Activated B cell treated with CpG ODN at 0.5 μM for 24 hours (primary cell): ENCODE measurements at regions of chr19 and their contacts with region 1.

Region 1: GRCh38 chr19:2962045-2962561 is 15.3 kb upstream of the TLE6 start:
- DNase-seq: no peak
- ATAC-seq: peak; percentile 84
- H3K4me3 Mint-ChIP-seq: peak overlapping the region; percentile 46
- H3K27ac Mint-ChIP-seq: no peak overlapping the region
- H3K4me1 Mint-ChIP-seq: peaks cover 18% of the 10 kb centered on the region
- H3K27me3 Mint-ChIP-seq: no peaks in the 10 kb centered on the region
- CTCF ChIP-seq: peak; percentile 20

Region 2: DNA sequence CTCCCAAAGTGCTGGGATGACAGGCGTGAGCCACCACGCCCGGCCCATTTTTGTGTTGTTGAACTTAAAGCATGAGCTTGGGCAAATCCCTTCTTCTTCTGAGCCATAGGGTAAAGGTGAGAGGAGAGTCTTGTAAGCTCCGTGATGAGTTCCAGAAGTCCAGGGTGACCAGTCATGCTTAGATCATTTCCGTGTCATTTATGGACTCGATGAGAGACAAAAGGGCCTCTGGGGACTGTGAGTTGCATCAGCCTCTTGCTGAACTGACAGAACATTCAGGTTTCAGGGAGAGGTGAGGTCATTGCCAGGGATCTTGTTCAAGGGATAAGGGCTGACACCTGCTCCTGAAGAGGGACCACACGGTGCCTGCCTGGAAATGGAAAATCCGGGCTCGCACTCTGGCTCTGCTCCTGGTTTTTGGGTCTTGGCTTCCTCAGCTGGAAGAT is 432.6 kb before region 1 on chr19:
- CTCF ChIA-PET with region 1: no interaction called
- POLR2A ChIA-PET with region 1: no interaction called
- intact Hi-C with region 1: no loop called
- DNase-seq: no peak
- ATAC-seq: no peak
- H3K4me3 Mint-ChIP-seq: no peak overlapping the region
- H3K27ac Mint-ChIP-seq: peak overlapping the region; percentile 53
- H3K4me1 Mint-ChIP-seq: peaks cover 22% of the 10 kb centered on the region
- H3K27me3 Mint-ChIP-seq: no peaks in the 10 kb centered on the region
- CTCF ChIP-seq: no peak

Region 3: GRCh38 chr19:3028305-3029064 is 66.4 kb after region 1 on chr19:
- CTCF ChIA-PET with region 1: no interaction called
- POLR2A ChIA-PET with region 1: interaction called, 12 read pairs
- intact Hi-C with region 1: no loop called
- DNase-seq: no peak
- ATAC-seq: peak; percentile 35
- H3K4me3 Mint-ChIP-seq: peak overlapping the region; percentile 70
- H3K27ac Mint-ChIP-seq: no peak overlapping the region
- H3K4me1 Mint-ChIP-seq: peaks cover 19% of the 10 kb centered on the region
- H3K27me3 Mint-ChIP-seq: peaks cover 34% of the 10 kb centered on the region
- CTCF ChIP-seq: no peak

Region 4: DNA sequence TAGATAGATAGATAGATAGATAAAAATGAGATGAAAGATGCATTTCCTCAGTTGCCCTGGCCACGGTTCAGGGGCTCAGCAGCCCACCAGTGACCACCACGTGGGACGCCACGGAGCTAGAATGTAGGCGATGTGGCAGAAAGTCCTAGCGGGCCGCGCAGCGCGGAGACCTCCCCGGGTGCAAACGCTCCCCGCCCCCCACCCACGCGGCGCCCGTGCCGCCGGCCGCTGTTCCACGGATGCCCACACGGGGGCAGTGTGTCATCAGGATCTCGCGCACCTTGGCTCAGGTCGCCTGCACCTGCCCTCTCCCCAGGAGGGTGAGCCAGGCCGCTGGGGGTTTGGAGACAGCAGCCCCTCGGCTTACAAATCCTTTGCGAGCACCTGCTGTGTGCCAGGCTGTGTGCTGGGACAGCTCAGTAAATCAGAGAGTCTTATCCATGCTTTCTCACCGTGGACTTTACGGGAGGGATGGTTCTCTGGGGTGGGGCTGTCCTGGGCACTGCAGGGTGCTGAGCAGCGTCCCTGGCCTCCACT is 113.9 kb after region 1 on chr19:
- CTCF ChIA-PET with region 1: no interaction called
- POLR2A ChIA-PET with region 1: interaction called, 3 read pairs
- intact Hi-C with region 1: loop called (anchors 1 kb)
- DNase-seq: peak; percentile 79
- ATAC-seq: peak; percentile 97
- H3K4me3 Mint-ChIP-seq: no peak overlapping the region
- H3K27ac Mint-ChIP-seq: no peak overlapping the region
- H3K4me1 Mint-ChIP-seq: peaks cover 10% of the 10 kb centered on the region
- H3K27me3 Mint-ChIP-seq: no peaks in the 10 kb centered on the region
- CTCF ChIP-seq: peak; percentile 63

Region 5: GRCh38 chr19:3108775-3109174 is 146.7 kb after region 1 on chr19:
- CTCF ChIA-PET with region 1: interaction called, 32 read pairs
- POLR2A ChIA-PET with region 1: interaction called, 8 read pairs
- intact Hi-C with region 1: loop called (anchors 1 kb)
- DNase-seq: peak; percentile 61
- ATAC-seq: peak; percentile 76
- H3K4me3 Mint-ChIP-seq: no peak overlapping the region
- H3K27ac Mint-ChIP-seq: no peak overlapping the region
- H3K4me1 Mint-ChIP-seq: peaks cover 11% of the 10 kb centered on the region
- H3K27me3 Mint-ChIP-seq: no peaks in the 10 kb centered on the region
- CTCF ChIP-seq: no peak

Region 6: DNA sequence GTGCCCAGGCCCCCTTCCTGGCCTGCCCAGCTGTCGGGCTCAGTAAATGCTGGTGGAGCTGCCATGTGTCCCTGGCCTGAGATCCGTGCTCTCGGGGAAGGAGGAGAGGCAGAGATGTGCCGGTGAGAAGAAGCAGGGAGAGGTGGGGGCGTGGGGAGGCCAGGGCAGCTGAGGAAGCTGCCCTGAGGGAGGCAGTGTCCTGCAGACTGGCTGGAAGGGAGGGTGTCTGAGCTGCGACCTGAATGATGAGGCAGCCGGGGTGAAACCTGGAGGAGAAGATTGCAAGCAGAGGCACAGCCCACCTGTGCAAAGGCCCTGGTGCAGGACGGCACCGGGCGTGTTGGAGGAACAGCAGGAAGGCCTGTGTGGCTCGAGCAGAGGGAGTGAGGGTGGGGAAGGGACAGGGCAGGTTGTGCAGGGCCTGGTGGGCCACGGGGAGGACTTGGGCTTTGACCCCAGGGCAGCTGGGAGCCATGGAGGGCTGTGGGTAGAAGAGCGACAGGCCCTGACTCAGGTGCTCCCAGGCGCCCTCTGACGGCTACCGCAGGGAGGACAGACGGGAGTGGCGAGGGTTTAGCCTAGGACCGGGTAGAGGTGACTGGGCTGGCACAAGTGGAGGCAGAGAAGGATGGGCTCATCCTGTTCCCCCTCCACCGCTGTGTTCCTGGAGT is 248.4 kb after region 1 on chr19:
- CTCF ChIA-PET with region 1: interaction called, 7 read pairs
- POLR2A ChIA-PET with region 1: no interaction called
- intact Hi-C with region 1: loop called (anchors 1 kb)
- DNase-seq: peak; percentile 62
- ATAC-seq: peak; percentile 94
- H3K4me3 Mint-ChIP-seq: no peak overlapping the region
- H3K27ac Mint-ChIP-seq: no peak overlapping the region
- H3K4me1 Mint-ChIP-seq: peaks cover 14% of the 10 kb centered on the region
- H3K27me3 Mint-ChIP-seq: no peaks in the 10 kb centered on the region
- CTCF ChIP-seq: no peak

Region 7: GRCh38 chr19:3429581-3430080 is 467.5 kb after region 1 on chr19:
- CTCF ChIA-PET with region 1: no interaction called
- POLR2A ChIA-PET with region 1: interaction called, 10 read pairs
- intact Hi-C with region 1: no loop called
- DNase-seq: peak; percentile 81
- ATAC-seq: peak; percentile 87
- H3K4me3 Mint-ChIP-seq: no peak overlapping the region
- H3K27ac Mint-ChIP-seq: no peak overlapping the region
- H3K4me1 Mint-ChIP-seq: peaks cover 20% of the 10 kb centered on the region
- H3K27me3 Mint-ChIP-seq: no peaks in the 10 kb centered on the region
- CTCF ChIP-seq: peak; percentile 63